ENCODE measurements at regions of chr22 and their contacts with region 1.

Region 1: DNA sequence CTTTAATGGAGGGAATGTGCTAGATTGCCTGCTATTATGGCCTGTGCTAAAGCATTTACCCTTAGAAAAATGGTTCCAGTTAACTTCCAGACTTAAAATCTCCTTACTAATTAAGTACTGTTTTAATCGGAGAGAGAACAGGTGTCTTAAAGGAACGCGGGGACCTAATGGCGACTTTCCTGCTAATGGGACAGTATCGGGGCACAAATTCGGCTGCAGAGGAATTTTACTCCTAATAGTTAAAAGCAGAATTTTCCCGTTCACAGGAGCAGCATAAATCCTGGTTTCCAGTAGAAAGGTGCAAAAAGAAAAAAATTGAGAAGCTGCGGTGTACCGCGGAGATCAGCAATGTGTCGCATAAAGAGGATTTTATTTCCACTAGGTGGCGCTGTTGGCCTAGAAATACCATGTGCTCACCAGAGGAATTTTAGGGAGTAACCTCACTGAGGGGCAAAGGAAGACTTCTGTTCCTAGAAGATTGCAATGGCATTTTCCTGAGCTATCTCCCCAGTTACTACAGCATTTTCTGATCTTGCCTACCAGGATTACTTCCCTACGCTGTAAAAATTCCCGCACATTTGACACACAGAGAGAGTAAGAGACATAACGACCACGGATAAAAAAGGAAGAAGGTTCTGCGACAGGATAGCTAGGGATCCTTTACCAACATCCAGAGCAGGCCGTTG is 44.5 kb downstream of the ZNF280B start:
- DNase-seq: no peak
- ATAC-seq: peak; percentile 36 to 59
- H3K4me3 ChIP-seq: no peak overlapping the region
- H3K27ac ChIP-seq: no peak overlapping the region
- H3K4me1 ChIP-seq: no peaks in the 10 kb centered on the region
- H3K27me3 ChIP-seq: no peaks in the 10 kb centered on the region

Region 2: GRCh38 chr22:22327723-22328122 is 136.3 kb before region 1 on chr22:
- intact Hi-C with region 1: no loop called
- DNase-seq: no peak
- ATAC-seq: no peak
- H3K4me3 ChIP-seq: no peak overlapping the region
- H3K27ac ChIP-seq: no peak overlapping the region
- H3K4me1 ChIP-seq: no peaks in the 10 kb centered on the region
- H3K27me3 ChIP-seq: peaks cover 5% of the 10 kb centered on the region

Region 3: GRCh38 chr22:22519591-22519990 is 55.6 kb after region 1 on chr22:
- intact Hi-C with region 1: no loop called
- DNase-seq: no peak
- ATAC-seq: no peak
- H3K4me3 ChIP-seq: no peak overlapping the region
- H3K27ac ChIP-seq: no peak overlapping the region
- H3K4me1 ChIP-seq: no peaks in the 10 kb centered on the region
- H3K27me3 ChIP-seq: no peaks in the 10 kb centered on the region

Region 4: DNA sequence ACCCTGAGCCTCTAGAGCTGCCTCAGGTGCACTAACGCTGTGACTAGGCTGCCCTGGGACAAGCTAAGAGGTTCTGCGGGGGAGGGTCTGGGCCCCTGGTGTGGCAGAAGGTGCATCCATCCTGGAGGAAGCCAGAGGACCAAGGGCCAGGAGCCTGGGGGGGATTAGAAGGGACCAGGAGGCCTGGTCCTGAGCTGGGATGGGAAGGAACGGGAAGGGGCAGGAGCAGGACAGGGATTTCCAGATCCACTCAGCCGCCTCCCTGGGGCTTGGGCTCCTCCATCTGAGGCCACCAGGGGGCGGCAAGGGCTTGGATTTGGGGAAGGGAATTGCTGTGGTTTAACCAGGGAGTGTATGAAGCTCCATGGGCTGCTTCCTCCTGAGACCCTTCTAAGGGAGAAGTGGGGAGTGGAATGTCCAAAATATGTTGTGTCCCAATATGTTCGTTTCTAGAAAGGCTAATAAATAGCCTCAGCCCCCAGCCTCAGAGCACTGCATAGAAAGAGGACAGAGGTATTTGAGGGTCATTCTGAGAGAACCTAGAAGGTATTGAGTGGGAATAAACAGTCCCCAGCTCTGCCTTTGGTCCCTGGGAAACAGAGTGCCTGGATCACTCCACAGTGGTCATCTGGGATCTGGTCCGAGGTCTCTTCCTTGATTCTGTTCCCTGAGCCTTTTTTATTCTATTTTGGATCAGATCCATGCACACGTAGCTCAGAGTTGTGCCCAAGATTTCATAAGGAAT is 112.4 kb after region 1 on chr22:
- intact Hi-C with region 1: no loop called
- DNase-seq: peak; percentile 37 to 68 (median 66)
- ATAC-seq: peak in 1 of 2 donors; percentile 50
- H3K4me3 ChIP-seq: no peak overlapping the region
- H3K27ac ChIP-seq: no peak overlapping the region
- H3K4me1 ChIP-seq: no peaks in the 10 kb centered on the region
- H3K27me3 ChIP-seq: no peaks in the 10 kb centered on the region

Region 5: DNA sequence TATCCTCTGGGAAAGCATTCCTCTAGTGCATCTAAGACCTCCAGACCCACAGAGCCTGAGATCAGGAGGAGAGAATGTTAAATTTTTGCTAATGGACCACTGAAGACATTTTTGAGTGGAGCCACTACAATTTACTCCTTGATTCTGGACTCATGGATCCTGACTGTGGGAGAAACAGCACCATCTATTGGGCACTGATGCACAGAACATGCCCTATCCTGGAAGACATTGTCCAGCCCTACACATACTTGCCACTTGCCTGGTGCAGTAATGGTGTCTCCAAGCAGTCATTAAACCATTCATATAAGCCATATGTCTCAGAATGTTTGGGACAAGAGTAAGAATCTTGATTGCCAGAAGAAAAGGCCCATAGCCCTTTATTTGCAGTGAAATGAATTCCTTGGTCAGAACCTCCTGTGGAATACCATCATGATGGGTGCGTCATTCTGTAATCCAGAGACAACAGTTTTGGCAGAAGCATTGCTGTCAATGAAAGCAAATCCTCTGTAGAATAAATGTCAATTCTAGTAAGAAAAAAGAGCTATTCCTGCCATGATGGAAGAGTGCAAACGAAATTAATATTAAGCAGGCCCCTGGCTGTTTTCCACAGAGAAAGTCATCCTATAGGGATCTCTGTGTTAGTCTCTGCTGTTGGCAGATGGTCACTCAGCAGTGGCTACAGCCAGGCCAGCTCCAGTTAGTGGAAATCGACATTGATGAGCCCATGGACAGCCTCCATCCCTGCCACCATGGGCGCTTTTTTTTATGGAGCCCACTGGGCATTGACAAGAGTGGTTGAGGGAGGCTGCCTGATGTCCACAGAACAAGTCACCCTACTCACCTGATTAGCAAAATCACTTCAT is 223.9 kb after region 1 on chr22:
- intact Hi-C with region 1: loop called in 2 of 4 experiments (anchors 5 to 10 kb)
- DNase-seq: peak in 1 of 3 donors; percentile 24
- ATAC-seq: peak; percentile 68 to 76
- H3K4me3 ChIP-seq: no peak overlapping the region
- H3K27ac ChIP-seq: no peak overlapping the region
- H3K4me1 ChIP-seq: no peaks in the 10 kb centered on the region
- H3K27me3 ChIP-seq: no peaks in the 10 kb centered on the region

Measured in right cardiac atrium (tissue), 5 donors.